ENCODE measurements at regions of chr6 and their contacts with region 1.

Region 1: DNA sequence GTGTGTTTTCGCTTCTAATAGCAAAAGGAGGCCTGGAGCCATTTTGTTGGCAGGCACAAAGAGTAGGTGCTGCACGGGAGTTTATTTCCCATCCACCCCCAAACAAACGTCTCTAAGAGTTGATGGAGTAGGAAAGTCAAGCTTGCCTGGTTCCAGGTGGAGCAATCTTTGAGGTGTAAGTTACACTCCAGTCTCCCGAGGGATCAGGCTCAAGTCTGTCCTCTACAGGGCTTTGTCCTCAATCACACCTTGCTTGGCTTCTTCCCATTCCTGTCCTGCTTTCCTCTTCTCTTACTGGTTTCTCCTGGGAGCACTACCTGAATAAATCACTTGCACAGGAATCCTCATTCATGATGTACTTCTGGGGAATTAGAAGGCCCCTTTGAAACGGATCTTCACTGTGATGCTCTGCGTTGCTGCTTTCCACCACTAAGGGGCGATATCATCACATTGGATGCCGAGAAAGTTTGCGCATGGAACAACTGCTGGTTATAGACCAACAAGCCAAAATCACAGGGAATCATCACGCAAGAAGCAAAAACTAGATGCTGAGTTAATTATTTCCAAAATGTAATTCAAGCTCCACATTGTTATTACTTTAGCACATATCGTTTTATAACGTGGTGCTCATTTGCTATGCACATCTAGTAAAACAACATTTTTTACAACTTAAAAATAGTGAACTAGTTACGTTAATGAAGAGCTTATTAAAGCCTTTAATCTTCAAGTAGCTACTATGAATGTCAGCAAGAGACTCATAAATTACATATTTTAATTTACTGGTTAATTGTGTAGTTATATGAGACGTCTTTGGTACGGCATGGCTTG is 156.8 kb downstream of the DNAH8 start:
- DNase-seq: peak in 2 of 5 donors; percentile 27 to 36
- ATAC-seq: peak in 1 of 4 donors; percentile 42
- H3K4me3 ChIP-seq: no peak overlapping the region
- H3K27ac ChIP-seq: no peak overlapping the region
- H3K4me1 ChIP-seq: peaks cover 0 to 5% (median 0%) of the 10 kb centered on the region in 12 donors
- H3K27me3 ChIP-seq: peaks cover 0 to 19% (median 0%) of the 10 kb centered on the region in 9 donors
- CTCF ChIP-seq: peak; percentile 69 to 87 (median 76)
- POLR2A ChIP-seq: no peak

Region 2: DNA sequence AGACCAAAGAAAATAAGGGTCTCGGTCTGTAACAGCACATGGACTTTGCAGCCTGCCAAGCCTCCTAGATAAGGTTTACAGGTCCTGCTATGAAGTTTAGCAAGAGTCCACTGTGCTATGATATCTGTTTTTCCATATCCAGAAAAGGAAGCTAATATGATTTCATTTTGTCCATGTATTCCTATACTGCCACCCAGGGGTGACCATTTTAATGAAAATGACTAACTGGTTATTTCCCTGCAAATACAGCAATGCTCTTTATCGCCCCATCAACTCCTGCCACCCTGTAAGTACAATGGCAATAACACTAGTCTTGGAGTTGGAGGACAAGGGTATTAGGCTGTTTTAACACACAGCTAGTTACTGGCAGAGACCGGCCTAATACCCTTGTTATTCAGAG is 61.5 kb after region 1 on chr6:
- intact Hi-C with region 1: loop called in 1 of 10 experiments (anchors 10 kb)
- DNase-seq: no peak
- ATAC-seq: no peak
- H3K4me3 ChIP-seq: no peak overlapping the region
- H3K27ac ChIP-seq: no peak overlapping the region
- H3K4me1 ChIP-seq: no peaks in the 10 kb centered on the region
- H3K27me3 ChIP-seq: peaks cover 0 to 22% (median 6%) of the 10 kb centered on the region in 9 donors
- CTCF ChIP-seq: peak in 3 of 12 donors; percentile 9 to 20 (median 14)
- POLR2A ChIP-seq: no peak

Region 3: GRCh38 chr6:39102071-39102820 is 230.3 kb after region 1 on chr6:
- intact Hi-C with region 1: loop called in 1 of 10 experiments (anchors 10 kb)
- DNase-seq: no peak
- ATAC-seq: peak in 2 of 4 donors; percentile 41 to 65
- H3K4me3 ChIP-seq: no peak overlapping the region
- H3K27ac ChIP-seq: no peak overlapping the region
- H3K4me1 ChIP-seq: peaks cover 0 to 5% (median 0%) of the 10 kb centered on the region in 12 donors
- H3K27me3 ChIP-seq: no peaks in the 10 kb centered on the region
- CTCF ChIP-seq: peak in 7 of 12 donors; percentile 22 to 41 (median 27)
- POLR2A ChIP-seq: no peak

Region 4: DNA sequence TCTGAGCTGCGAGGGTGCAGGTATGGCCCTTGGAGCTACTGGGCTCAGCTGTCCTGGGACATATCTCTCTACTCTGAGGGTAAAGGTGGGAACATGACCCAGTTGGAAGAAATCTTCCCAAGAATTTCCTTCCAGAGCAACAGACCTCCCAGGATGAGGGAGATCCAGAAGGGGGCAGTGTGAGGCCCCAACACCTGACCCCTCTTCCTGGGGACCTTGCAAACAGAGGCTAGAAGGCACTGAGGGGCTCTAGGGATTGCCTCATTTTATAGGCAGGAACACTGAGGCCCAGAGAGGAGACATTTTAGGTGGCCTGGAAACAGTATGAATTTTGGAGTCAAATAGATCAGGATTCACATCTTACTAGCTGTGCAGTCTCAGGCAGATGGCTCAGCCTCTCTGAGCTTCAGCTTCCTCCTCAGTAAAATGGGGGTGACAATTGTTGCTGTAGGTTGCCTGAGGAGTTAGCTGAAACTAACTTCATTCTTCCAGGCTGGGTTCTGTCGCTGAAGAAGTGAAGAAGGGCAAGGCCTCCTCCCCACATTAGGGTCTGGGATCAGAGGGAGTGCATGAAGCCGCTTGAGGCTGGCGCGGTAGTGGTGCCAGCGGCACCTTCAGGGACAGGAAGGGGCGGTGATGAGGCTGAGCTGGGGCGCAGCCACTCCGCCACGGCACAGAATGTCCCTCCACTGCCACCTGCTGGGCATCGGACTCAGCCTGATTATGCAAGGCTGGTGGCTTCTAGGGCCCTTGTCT is 430.9 kb after region 1 on chr6:
- intact Hi-C with region 1: loop called in 6 of 10 experiments (anchors 2 to 5 kb)
- DNase-seq: peak; percentile 71 to 91 (median 77)
- ATAC-seq: peak; percentile 82 to 93 (median 90)
- H3K4me3 ChIP-seq: no peak overlapping the region
- H3K27ac ChIP-seq: no peak overlapping the region
- H3K4me1 ChIP-seq: peaks cover 0 to 5% (median 0%) of the 10 kb centered on the region in 12 donors
- H3K27me3 ChIP-seq: peaks cover 0 to 19% (median 0%) of the 10 kb centered on the region in 9 donors
- CTCF ChIP-seq: peak; percentile 76 to 90 (median 82)
- POLR2A ChIP-seq: no peak

Region 5: DNA sequence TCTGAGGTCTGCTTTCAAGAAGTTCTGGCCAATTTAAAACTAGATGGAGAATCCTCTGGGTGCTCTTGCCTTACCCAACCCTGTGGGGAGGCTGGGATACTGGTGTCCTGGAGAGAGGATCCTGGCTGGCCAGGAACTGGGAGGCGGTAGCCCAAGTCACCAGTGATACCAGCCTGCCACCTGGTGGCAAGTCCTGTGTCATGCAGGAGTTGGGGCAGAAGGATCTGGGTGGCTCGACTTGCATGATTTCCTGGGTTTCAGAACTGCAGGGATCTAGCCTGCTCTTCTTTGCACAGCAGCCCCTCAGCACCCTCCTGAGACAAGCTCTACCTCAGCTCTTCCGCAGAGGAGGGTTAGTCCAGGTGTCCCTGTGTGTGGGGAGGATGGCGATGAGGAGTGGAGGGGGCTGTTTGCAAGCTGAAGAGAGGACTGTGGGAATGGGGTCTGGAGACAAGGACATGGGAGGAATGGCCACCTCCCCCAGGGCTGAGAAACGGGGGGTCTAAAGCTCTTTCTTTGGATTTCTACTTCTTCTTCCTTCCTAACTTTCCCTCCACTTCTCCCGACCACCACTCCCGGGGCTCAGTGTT is 438.1 kb after region 1 on chr6:
- intact Hi-C with region 1: loop called in 6 of 10 experiments (anchors 1 to 5 kb)
- DNase-seq: peak; percentile 50 to 82 (median 68)
- ATAC-seq: peak in 3 of 4 donors; percentile 73 to 87 (median 79)
- H3K4me3 ChIP-seq: no peak overlapping the region
- H3K27ac ChIP-seq: no peak overlapping the region
- H3K4me1 ChIP-seq: peaks cover 0 to 17% (median 10%) of the 10 kb centered on the region in 12 donors
- H3K27me3 ChIP-seq: peaks cover 17 to 55% (median 39%) of the 10 kb centered on the region in 9 donors
- CTCF ChIP-seq: peak; percentile 77 to 89 (median 84)
- POLR2A ChIP-seq: no peak